Stomach (tissue), 19 donors: ENCODE measurements at regions of chr1 and their contacts with region 1.

Region 1: DNA sequence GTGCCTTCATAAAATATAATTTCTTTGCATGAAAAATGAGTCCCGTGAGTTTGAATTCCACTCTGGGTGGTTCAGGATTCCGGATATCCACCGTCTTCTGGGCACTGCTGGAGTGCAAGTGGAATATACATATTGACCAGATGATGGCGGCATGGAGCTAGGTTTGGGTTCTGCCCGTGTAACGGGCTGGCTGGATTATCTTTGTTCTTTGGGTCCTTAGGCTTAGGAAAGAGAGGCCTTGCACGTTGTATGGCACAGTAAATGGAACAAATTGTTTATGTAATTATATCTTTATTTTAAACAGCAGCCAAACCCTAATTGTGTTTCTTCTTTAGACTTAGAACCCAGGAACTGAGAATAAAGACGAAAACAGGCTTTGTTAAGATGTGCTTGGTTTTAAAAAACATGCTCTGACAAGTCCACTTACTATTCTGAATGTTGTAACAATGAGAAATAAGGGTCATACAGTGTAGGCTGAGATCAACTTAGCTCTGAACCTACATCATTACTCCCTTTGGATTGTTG is 13.5 kb upstream of the ACBD6 start:
- DNase-seq: peak; percentile 63 to 91
- H3K4me3 ChIP-seq: no peak overlapping the region
- H3K27ac ChIP-seq: no peak overlapping the region
- H3K4me1 ChIP-seq: peaks cover 0 to 9% (median 0%) of the 10 kb centered on the region in 4 donors
- H3K27me3 ChIP-seq: no peaks in the 10 kb centered on the region
- CTCF ChIP-seq: peak in 5 of 7 experiments; percentile 63 to 73 (median 67)
- EP300 ChIP-seq: no peak
- POLR2A ChIP-seq: no peak

Region 2: DNA sequence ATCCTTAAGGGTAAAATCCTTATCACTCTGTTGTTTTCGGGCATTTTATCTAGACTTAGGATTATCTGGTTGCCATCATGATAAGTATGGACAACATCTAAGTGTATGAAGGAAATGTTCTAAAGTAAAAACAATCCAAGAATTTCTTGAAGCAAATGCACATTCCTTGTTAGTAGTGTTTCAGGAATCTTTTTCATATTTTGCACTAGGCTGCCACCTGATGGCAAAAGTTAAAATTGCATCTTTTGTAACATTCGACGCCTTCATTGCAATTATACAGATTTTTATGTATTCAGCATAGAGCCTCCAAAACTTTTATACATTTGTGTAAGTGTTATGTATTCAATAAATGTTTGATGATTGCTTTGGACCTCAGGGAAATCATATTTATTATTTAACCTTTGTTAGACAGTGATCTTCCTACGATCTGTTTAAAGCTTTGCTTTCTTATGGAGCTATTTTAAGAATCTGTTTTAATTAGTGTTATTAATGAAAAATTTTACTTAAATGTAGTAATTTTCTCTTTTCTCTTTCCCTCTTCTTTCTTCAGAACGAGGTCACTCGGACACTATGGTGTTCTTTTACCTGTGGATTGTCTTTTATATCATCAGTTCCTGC is 347.3 kb after region 1 on chr1:
- intact Hi-C with region 1: loop called (anchors 5 kb)
- DNase-seq: peak in 1 of 2 donors; percentile 81
- H3K4me3 ChIP-seq: no peak overlapping the region
- H3K27ac ChIP-seq: no peak overlapping the region
- H3K4me1 ChIP-seq: peaks cover 0 to 9% (median 4%) of the 10 kb centered on the region in 4 donors
- H3K27me3 ChIP-seq: no peaks in the 10 kb centered on the region
- CTCF ChIP-seq: peak in 5 of 7 experiments; percentile 57 to 73 (median 67)
- EP300 ChIP-seq: no peak
- POLR2A ChIP-seq: no peak